ENCODE measurements at regions of chr4 and their contacts with region 1.

Region 1: GRCh38 chr4:128863312-128864075 is 54.0 kb downstream of the JADE1 start:
- DNase-seq: peak; percentile 63 to 86
- ATAC-seq: peak in 2 of 3 donors; percentile 27 to 46
- H3K4me3 ChIP-seq: no peak overlapping the region
- H3K4me3 Mint-ChIP-seq: peak overlapping the region; percentile 58
- H3K27ac ChIP-seq: peak overlapping the region; percentile 44
- H3K27ac Mint-ChIP-seq: peak overlapping the region; percentile 85 to 89
- H3K4me1 ChIP-seq: peaks cover 27% of the 10 kb centered on the region
- H3K4me1 Mint-ChIP-seq: peaks cover 56 to 58% of the 10 kb centered on the region in 2 donors
- H3K27me3 ChIP-seq: no peaks in the 10 kb centered on the region
- H3K27me3 Mint-ChIP-seq: no peaks in the 10 kb centered on the region
- CTCF ChIP-seq: peak; percentile 96

Region 2: DNA sequence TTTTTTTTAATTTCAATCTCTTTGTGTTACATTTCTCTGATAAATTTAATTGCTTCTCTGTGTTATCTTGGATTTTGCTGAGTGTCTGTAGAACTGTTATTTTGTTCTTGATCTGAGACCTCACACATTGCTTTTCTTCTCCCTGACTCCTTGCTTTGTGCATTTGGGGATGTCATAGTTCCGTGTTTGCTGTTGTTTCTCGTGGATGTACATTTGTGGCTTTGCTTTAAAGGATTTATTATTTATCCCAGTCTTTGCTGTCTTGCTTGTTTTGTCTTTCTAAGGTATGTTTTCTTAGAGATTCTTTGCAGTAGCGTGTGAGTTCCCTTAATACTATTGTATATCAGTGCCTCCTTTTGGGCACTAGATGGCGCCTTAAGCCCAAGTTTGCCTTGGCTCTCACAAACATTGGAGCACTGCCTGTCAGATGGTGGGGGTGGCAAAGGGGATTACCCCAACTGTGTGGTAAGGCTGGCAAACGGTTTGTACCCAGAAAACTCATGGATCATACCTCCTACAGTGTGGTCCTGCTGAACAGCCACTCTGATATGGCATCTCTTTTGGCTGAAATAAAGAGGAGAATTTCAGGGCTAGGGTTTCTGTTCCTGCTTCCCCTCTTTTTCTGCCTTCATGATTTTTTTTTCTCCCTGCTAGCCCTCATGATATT is 672.2 kb before region 1 on chr4:
- intact Hi-C with region 1: loop called (anchors 1 kb)
- DNase-seq: peak; percentile 44 to 87
- ATAC-seq: peak; percentile 92 to 100 (median 100)
- H3K4me3 ChIP-seq: no peak overlapping the region
- H3K4me3 Mint-ChIP-seq: no peak overlapping the region
- H3K27ac ChIP-seq: no peak overlapping the region
- H3K27ac Mint-ChIP-seq: no peak overlapping the region
- H3K4me1 ChIP-seq: no peaks in the 10 kb centered on the region
- H3K4me1 Mint-ChIP-seq: peaks cover 6% of the 10 kb centered on the region in 2 donors
- H3K27me3 ChIP-seq: no peaks in the 10 kb centered on the region
- H3K27me3 Mint-ChIP-seq: no peaks in the 10 kb centered on the region
- CTCF ChIP-seq: peak; percentile 94

Region 3: DNA sequence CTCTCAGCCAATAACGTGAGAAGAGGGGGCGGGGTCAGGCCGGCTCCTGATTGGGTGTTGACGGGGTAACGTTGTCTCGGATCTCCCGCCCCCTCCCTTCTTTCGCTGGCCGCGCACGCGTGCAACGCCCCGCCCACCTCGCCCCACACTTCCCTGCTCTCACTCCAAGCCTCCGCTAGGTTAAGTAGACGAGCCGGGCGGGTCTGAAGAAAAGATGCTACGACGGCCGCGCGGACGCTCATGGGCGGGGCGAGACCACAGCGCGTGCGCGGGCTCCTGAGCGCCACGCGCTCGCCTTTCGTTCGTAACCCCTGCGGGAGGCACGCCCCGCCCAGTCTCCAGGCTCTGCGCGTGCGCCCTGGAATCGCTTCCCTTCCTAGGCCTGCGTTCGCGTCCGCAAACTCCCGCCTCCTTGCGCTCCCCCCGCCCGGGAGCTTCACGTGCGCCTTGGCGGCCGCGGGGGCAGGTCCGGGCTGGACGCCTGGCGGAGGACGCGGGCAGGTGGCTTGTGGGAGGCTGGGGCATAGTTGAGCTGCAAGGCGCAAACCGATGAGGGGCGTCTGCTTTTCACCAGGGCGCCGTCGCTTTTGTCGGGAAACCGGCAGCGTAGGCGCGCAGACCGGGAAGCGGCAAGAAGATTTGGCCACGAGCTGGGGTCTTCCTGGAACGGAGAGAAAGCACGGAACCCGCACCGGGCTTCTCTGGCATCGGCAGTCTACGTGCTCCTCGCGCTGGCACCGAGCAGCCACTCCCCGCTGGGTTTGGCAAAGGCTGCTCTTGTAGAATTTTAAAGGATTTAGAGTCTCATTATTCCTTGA is 575.4 kb before region 1 on chr4:
- intact Hi-C with region 1: loop called (anchors 5 kb)
- DNase-seq: peak; percentile 97 to 100
- ATAC-seq: peak; percentile 84 to 94 (median 85)
- H3K4me3 ChIP-seq: peak overlapping the region; percentile 87
- H3K4me3 Mint-ChIP-seq: peak overlapping the region; percentile 93
- H3K27ac ChIP-seq: peak overlapping the region; percentile 97
- H3K27ac Mint-ChIP-seq: peak overlapping the region; percentile 85 to 90
- H3K4me1 ChIP-seq: peaks cover 16% of the 10 kb centered on the region
- H3K4me1 Mint-ChIP-seq: peaks cover 34 to 35% of the 10 kb centered on the region in 2 donors
- H3K27me3 ChIP-seq: no peaks in the 10 kb centered on the region
- H3K27me3 Mint-ChIP-seq: peaks cover 0 to 2% of the 10 kb centered on the region in 2 donors
- CTCF ChIP-seq: no peak

Region 4: GRCh38 chr4:128782076-128782715 is 81.3 kb before region 1 on chr4:
- intact Hi-C with region 1: loop called (anchors 1 kb)
- DNase-seq: peak; percentile 37 to 82
- ATAC-seq: peak; percentile 71 to 89 (median 88)
- H3K4me3 ChIP-seq: no peak overlapping the region
- H3K4me3 Mint-ChIP-seq: no peak overlapping the region
- H3K27ac ChIP-seq: no peak overlapping the region
- H3K27ac Mint-ChIP-seq: no peak overlapping the region
- H3K4me1 ChIP-seq: no peaks in the 10 kb centered on the region
- H3K4me1 Mint-ChIP-seq: no peaks in the 10 kb centered on the region
- H3K27me3 ChIP-seq: no peaks in the 10 kb centered on the region
- H3K27me3 Mint-ChIP-seq: peaks cover 6% of the 10 kb centered on the region in 2 donors
- CTCF ChIP-seq: peak; percentile 49